Dorsolateral prefrontal cortex (tissue), 120 donors: ENCODE measurements at regions of chr10 and their contacts with region 1.

Region 1: GRCh38 chr10:100998991-100999741 is 442 bp upstream of the LZTS2 start:
- DNase-seq: peak; percentile 62 to 89 (median 81)
- H3K4me3 ChIP-seq: peak overlapping the region; percentile 52 to 94 (median 85)
- H3K27ac ChIP-seq: peak overlapping the region; percentile 96 to 100 (median 100)
- H3K27me3 ChIP-seq: no peaks in the 10 kb centered on the region
- CTCF ChIP-seq: peak; percentile 79 to 99 (median 94)

Region 2: DNA sequence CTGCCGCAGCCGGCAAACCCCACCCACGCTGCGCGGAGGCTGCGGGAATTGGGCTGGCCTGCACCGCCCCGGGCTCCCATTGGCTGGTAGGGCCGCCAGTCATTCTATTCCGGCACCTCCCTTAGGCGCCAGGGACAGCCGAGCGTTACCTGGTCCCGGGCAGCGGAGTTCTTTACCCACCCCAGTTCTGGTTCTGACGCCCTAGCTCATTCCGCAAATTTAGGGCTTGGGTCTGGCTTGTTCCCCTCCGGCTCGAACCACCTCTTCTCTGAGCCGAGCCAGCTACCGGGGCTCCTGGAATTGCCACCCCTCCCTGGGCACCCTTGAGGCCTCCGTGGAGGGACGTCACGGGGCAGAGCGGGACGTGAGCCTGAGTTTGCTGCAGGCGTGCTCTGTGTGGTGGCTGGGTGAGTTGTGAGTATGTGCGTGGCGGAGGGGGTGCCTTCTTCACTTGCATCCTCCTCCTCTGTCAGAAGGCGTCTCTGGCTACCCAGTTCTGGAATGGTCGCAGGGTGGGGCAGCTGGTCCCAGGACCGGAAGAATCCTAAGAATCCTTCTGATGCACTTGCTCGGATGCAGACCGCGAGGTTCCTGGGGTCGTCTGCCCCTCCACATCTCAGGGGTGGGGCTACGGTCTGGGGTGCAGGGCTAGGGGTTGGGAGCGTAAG is 32.1 kb after region 1 on chr10 and contains the starts of genes PDZD7 and SFXN3:
- intact Hi-C with region 1: loop called in 1 of 2 experiments (anchors 1 kb)
- DNase-seq: peak; percentile 96 to 99 (median 98)
- H3K4me3 ChIP-seq: peak within 1 kb of the TSS; percentile 55 to 100 (median 92)
- H3K27ac ChIP-seq: peak within 1 kb of the TSS; percentile 93 to 100 (median 99)
- H3K27me3 ChIP-seq: no peaks in the 10 kb centered on the region
- CTCF ChIP-seq: peak in 14 of 56 donors; percentile 2 to 43 (median 22)
- total RNA-seq, gene PDZD7: 11.3 to 42.8 (median 23.8) TPM
- total RNA-seq, gene SFXN3: 53.8 to 127 (median 83.8) TPM